Activated CD4-positive, alpha-beta T cell treated with anti-CD3 and anti-CD28 coated beads, Interleukin-2, amount 10 ng/mL, durations not matched to agents 24 days and 14 days (primary cell): ENCODE measurements at regions of chr9 and their contacts with region 1.

Region 1: DNA sequence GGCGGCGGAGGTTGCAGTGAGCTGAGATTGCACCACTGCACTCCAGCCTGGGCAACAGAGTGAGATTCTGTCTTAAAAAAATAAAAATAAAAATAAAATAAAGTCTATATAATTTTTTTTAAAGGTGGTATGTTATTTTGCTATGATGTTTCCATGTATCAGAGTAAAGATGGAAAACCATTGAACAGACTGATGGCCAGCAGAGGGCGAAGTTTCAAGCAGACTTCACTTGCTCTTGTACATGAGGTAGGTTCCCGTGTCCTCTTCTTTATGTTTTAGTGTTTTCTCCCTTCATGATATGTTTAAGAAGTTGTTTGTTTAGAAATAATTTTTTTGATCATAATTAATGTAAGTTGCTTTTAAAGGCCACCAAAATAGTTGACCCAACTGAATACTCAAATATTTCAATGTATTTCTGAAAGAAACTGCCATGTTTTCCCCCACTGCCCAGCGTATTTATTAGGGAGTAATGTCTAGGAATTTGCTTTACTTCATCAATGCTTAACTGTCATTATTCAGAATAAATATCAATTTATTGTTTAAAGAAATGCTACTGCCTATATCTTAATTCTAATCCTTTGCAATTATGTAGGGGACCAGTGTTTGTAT is 146.4 kb downstream of the HACD4 start:
- DNase-seq: peak; percentile 85
- H3K4me3 Mint-ChIP-seq: no peak overlapping the region
- H3K27ac Mint-ChIP-seq: no peak overlapping the region
- H3K4me1 Mint-ChIP-seq: peaks cover 1% of the 10 kb centered on the region
- H3K27me3 Mint-ChIP-seq: no peaks in the 10 kb centered on the region

Region 2: DNA sequence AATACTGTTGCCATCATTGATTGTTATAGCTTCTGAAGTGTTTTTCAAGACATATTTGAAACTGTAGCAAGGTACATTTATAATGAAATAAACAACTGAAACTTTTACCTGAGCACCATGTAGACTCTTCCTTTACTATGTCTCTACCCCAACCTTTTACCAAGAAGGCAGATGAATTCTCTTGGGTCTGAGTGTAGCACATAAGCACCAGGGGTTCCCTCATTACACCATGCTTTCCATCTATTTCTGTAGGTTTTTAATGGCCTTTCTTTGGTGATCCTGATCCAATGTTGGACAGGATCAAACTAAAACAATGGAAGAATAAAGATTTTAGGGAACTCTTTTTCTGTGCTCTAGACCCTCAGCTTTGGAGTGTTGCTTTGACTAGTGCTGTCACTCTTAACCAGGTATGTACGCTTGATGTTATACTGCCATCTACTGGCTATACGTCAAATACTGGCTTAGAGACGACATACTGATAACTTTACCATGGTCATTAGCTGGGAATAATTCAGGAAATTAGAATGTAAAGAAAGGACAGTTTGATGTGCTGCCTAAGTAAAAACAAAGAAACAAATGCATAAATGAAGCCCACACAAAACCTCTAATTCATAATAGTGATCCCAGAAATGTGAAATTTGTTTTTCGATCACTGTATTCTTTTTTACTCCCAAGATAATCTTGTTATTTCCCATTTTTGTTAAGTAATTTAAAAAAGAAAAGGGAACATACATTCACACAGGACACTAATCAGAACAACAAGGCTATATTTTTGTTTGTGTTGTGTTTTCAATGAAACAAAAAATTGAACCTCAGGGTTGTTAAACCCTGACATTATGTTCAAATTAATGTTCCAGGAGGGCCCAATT is 225.9 kb after region 1 on chr9:
- intact Hi-C with region 1: loop called (anchors 2 kb)
- DNase-seq: peak; percentile 81
- H3K4me3 Mint-ChIP-seq: no peak overlapping the region
- H3K27ac Mint-ChIP-seq: no peak overlapping the region
- H3K4me1 Mint-ChIP-seq: no peaks in the 10 kb centered on the region
- H3K27me3 Mint-ChIP-seq: peaks cover 24% of the 10 kb centered on the region